Adrenal gland (tissue), 19 donors: ENCODE measurements at regions of chr6 and their contacts with region 1.

Region 1: GRCh38 chr6:133512410-133513016 is 271.4 kb downstream of the EYA4 start:
- DNase-seq: peak; percentile 37 to 81 (median 49)
- H3K4me3 ChIP-seq: no peak overlapping the region
- H3K27ac ChIP-seq: no peak overlapping the region
- H3K4me1 ChIP-seq: no peaks in the 10 kb centered on the region
- H3K27me3 ChIP-seq: peaks cover 4% of the 10 kb centered on the region
- CTCF ChIP-seq: peak; percentile 42 to 78 (median 69)
- POLR2A ChIP-seq: no peak

Region 2: DNA sequence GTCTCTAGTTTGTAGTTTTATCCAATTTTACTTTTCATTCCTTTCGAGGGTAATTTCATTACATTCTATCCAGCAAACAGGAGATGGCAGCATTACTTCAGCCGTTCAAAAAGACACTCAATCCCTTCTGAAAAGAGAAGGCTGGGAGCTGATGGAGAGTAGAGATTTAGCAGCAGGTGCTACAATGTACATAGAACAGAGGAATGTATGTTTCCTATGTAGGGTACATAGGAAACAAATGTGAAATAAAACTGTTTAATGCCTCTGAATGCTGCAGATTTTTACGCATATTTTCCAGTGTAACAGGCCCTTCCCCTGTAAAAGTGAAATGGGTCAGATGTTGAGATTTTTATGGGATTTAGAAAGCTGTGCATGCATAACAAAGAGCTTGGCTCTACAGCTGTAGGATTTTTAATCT is 682.2 kb before region 1 on chr6:
- intact Hi-C with region 1: loop called in 1 of 2 experiments (anchors 5 kb)
- DNase-seq: peak in 1 of 7 donors; percentile 16
- H3K4me3 ChIP-seq: no peak overlapping the region
- H3K27ac ChIP-seq: no peak overlapping the region
- H3K4me1 ChIP-seq: no peaks in the 10 kb centered on the region
- H3K27me3 ChIP-seq: no peaks in the 10 kb centered on the region
- CTCF ChIP-seq: peak; percentile 8 to 54 (median 42)
- POLR2A ChIP-seq: no peak

Region 3: GRCh38 chr6:132962936-132963868 is 549.3 kb before region 1 on chr6:
- intact Hi-C with region 1: loop called in 1 of 2 experiments (anchors 5 kb)
- DNase-seq: peak; percentile 56 to 87 (median 74)
- H3K4me3 ChIP-seq: no peak overlapping the region
- H3K27ac ChIP-seq: no peak overlapping the region
- H3K4me1 ChIP-seq: no peaks in the 10 kb centered on the region
- H3K27me3 ChIP-seq: no peaks in the 10 kb centered on the region
- CTCF ChIP-seq: peak; percentile 59 to 83 (median 68)
- POLR2A ChIP-seq: no peak

Region 4: DNA sequence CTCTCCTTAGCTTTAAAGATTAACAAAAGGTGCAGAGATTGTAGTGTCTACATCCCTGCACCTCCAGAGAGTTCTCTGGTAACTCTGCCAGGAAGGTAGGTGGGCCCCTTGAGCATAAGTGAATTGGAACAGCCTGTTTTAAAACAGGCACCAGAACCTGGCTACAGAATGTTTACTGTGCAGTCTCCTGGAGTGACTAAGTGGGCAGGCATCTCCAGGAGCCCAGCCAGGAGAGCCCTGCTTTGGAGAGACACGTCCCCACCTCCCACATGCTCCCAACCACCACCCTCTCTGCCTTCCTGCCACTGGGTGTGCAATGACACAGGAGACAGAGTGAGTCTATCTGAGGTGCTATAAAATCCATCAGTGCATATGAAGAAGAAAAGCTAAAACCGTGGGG is 381.6 kb before region 1 on chr6:
- intact Hi-C with region 1: no loop called
- DNase-seq: peak; percentile 40 to 84 (median 79)
- H3K4me3 ChIP-seq: no peak overlapping the region
- H3K27ac ChIP-seq: peak overlapping the region in 3 of 5 donors; percentile 36 to 66 (median 56)
- H3K4me1 ChIP-seq: peaks cover 12 to 29% of the 10 kb centered on the region in 2 donors
- H3K27me3 ChIP-seq: no peaks in the 10 kb centered on the region
- CTCF ChIP-seq: no peak
- POLR2A ChIP-seq: peak in 1 of 2 donors; percentile 10

Region 5: GRCh38 chr6:133184798-133185372 is 327.6 kb before region 1 on chr6:
- intact Hi-C with region 1: loop called in 1 of 2 experiments (anchors 10 kb)
- DNase-seq: no peak
- H3K4me3 ChIP-seq: no peak overlapping the region
- H3K27ac ChIP-seq: no peak overlapping the region
- H3K4me1 ChIP-seq: no peaks in the 10 kb centered on the region
- H3K27me3 ChIP-seq: peaks cover 6% of the 10 kb centered on the region
- CTCF ChIP-seq: peak in 5 of 6 experiments; percentile 12 to 58 (median 23)
- POLR2A ChIP-seq: no peak

Region 6: GRCh38 chr6:133377219-133377618 is 135.3 kb before region 1 on chr6:
- intact Hi-C with region 1: no loop called
- DNase-seq: no peak
- H3K4me3 ChIP-seq: no peak overlapping the region
- H3K27ac ChIP-seq: no peak overlapping the region
- H3K4me1 ChIP-seq: no peaks in the 10 kb centered on the region
- H3K27me3 ChIP-seq: no peaks in the 10 kb centered on the region
- CTCF ChIP-seq: no peak
- POLR2A ChIP-seq: no peak

Region 7: DNA sequence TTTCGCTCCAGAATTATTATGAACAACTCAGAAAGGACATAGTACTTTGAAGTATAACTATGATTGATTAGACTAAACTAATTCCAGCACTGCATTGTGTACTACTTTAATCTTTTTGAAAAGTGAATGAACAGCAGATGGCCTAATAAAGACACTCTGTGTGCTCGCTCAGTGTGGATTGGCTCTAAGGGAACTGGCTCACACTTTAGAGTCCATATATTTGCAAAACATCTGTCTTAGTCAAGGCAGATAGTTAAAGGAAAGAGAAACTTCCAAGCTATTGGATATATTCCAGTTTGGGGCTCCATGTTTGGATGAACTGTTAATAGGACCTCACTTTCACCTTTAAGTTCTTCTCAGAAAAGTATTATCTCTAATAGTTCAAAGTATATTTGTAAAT is 52.4 kb before region 1 on chr6:
- intact Hi-C with region 1: no loop called
- DNase-seq: no peak
- H3K4me3 ChIP-seq: no peak overlapping the region
- H3K27ac ChIP-seq: no peak overlapping the region
- H3K4me1 ChIP-seq: no peaks in the 10 kb centered on the region
- H3K27me3 ChIP-seq: no peaks in the 10 kb centered on the region
- CTCF ChIP-seq: no peak
- POLR2A ChIP-seq: no peak

Region 8: DNA sequence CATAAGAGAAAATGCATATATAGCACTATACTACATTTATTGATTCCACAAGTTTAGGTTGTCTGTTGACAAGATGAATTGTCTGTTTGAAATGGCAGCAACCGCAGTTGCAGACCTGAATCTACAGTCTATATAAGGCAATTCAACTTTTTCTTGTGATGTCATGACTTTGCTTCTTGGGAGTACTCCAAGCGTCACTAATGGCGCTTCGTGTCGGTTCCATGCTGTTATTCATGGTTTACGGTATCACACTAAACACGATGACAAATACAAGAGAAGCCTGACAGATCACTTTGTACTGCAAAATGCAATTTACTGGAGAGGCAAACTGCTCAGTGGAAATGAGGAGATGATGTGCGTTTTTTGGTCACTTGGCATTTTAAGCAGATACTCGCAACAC is 96.1 kb after region 1 on chr6:
- intact Hi-C with region 1: no loop called
- DNase-seq: no peak
- H3K4me3 ChIP-seq: no peak overlapping the region
- H3K27ac ChIP-seq: no peak overlapping the region
- H3K4me1 ChIP-seq: no peaks in the 10 kb centered on the region
- H3K27me3 ChIP-seq: no peaks in the 10 kb centered on the region
- CTCF ChIP-seq: no peak
- POLR2A ChIP-seq: no peak